A673 (cell line): ENCODE measurements at regions of chr4 and their contacts with region 1.

Region 1: GRCh38 chr4:26860157-26860921 is at the start of gene STIM2:
- DNase-seq: peak; percentile 99
- H3K4me3 ChIP-seq: peak within 1 kb of the TSS; percentile 85
- H3K27ac ChIP-seq: peak within 1 kb of the TSS; percentile 88
- H3K4me1 ChIP-seq: peaks cover 52% of the 10 kb centered on the region
- H3K27me3 ChIP-seq: no peaks in the 10 kb centered on the region
- CTCF ChIP-seq: peak; percentile 61
- total RNA-seq, gene STIM2: 56.1 and 59.0 TPM in 2 replicates

Region 2: GRCh38 chr4:26568446-26568994 is 291.8 kb before region 1 on chr4:
- CTCF ChIA-PET with region 1: no interaction called
- POLR2A ChIA-PET with region 1: no interaction called
- intact Hi-C with region 1: loop called (anchors 10 kb)
- DNase-seq: peak; percentile 96
- H3K4me3 ChIP-seq: no peak overlapping the region
- H3K27ac ChIP-seq: peak overlapping the region; percentile 44
- H3K4me1 ChIP-seq: peaks cover 40% of the 10 kb centered on the region
- H3K27me3 ChIP-seq: no peaks in the 10 kb centered on the region
- CTCF ChIP-seq: no peak

Region 3: GRCh38 chr4:26787461-26788340 is 72.6 kb before region 1 on chr4:
- CTCF ChIA-PET with region 1: no interaction called
- POLR2A ChIA-PET with region 1: no interaction called
- intact Hi-C with region 1: loop called (anchors 5 kb)
- DNase-seq: peak; percentile 85
- H3K4me3 ChIP-seq: no peak overlapping the region
- H3K27ac ChIP-seq: peak overlapping the region; percentile 62
- H3K4me1 ChIP-seq: peaks cover 39% of the 10 kb centered on the region
- H3K27me3 ChIP-seq: no peaks in the 10 kb centered on the region
- CTCF ChIP-seq: peak; percentile 73

Region 4: DNA sequence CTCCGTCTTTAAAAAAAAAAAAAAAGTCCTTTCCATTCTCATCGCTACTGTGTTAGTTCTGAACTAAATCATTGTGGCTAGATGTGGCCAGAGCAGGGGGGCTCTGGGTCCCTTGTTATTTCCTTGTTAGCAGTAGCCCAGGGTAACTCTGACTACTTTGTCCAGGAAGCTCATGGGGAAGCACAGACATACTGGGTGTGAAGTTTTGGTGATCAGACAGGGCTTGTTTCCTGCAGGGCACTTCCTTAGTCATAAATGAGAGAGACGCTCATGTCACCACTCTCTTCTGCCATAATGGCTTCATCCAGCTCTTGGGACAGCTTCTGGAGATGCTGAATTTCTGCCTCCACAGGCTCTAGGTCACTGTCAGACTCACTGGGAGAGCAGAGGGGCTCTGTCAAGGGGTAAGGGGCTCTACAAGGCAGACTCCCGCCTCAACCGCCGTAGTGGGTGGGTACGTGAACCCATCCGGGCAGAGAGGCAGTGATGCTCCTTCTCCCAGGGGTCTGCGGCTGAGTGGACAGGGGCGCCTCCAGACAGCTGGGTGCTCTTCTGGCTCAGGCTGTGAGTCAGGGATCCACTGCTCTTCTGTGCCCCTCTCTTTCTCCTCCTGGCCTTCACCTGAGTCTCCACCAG is 13.2 kb after region 1 on chr4:
- CTCF ChIA-PET with region 1: no interaction called
- POLR2A ChIA-PET with region 1: interaction called, 16 read pairs
- intact Hi-C with region 1: no loop called
- DNase-seq: no peak
- H3K4me3 ChIP-seq: no peak overlapping the region
- H3K27ac ChIP-seq: peak overlapping the region; percentile 25
- H3K4me1 ChIP-seq: peaks cover 58% of the 10 kb centered on the region
- H3K27me3 ChIP-seq: no peaks in the 10 kb centered on the region
- CTCF ChIP-seq: no peak

Region 5: DNA sequence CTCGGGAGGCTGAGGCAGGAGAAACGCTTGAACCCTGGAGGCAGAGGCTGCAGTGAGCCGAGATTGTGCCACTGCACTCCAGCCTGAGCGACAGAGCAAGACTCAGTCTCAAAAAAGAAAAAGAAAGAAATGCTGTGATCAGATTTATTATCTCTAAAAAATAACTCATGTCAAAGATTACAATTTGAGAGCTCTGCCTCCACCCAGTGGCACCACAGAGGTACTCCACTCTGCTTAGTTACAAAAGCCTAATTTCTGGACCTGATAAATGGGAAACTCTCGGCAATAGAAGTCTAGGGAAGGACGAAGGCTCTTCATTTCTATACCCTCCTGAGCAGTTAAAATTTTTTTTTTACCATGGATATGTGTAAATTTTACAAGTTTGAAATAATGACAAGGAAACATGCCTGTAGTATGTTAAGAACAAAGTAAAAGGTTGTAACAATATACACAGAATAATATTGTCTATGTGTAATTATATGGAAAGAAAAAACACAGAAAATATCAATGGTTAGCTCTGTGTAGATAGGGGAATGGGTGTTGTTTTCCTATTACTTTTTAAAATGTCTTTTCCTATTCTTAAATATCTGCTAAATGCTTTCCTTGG is 150.1 kb after region 1 on chr4:
- CTCF ChIA-PET with region 1: no interaction called
- POLR2A ChIA-PET with region 1: interaction called, 4 read pairs
- intact Hi-C with region 1: loop called (anchors 2 kb)
- DNase-seq: peak; percentile 84
- H3K4me3 ChIP-seq: no peak overlapping the region
- H3K27ac ChIP-seq: no peak overlapping the region
- H3K4me1 ChIP-seq: peaks cover 36% of the 10 kb centered on the region
- H3K27me3 ChIP-seq: no peaks in the 10 kb centered on the region
- CTCF ChIP-seq: peak; percentile 89

Region 6: GRCh38 chr4:27318743-27319142 is 458.4 kb after region 1 on chr4:
- CTCF ChIA-PET with region 1: no interaction called
- POLR2A ChIA-PET with region 1: no interaction called
- intact Hi-C with region 1: no loop called
- DNase-seq: peak; percentile 80
- H3K4me3 ChIP-seq: no peak overlapping the region
- H3K27ac ChIP-seq: no peak overlapping the region
- H3K4me1 ChIP-seq: no peaks in the 10 kb centered on the region
- H3K27me3 ChIP-seq: no peaks in the 10 kb centered on the region
- CTCF ChIP-seq: peak; percentile 75

Region 7: DNA sequence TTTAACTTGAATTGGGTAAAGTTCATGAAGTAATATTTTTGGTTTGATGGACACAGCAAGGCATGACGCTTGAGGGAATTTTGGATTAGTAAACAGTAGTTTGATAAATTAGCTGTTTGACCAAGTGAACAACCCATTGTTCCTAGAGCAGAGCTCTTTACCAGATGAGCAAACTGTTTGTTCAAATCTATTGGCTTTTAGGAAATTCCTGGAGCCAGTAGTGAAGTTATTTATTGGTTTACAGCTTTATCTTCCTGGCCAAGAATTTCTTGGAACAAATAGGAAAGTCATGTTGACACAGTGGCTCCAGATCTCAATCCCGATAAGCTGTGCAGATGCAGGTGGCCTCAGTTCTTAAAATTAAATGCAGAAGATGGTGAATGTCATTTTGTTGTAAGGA is 554.5 kb after region 1 on chr4:
- CTCF ChIA-PET with region 1: no interaction called
- POLR2A ChIA-PET with region 1: no interaction called
- intact Hi-C with region 1: no loop called
- DNase-seq: no peak
- H3K4me3 ChIP-seq: no peak overlapping the region
- H3K27ac ChIP-seq: no peak overlapping the region
- H3K4me1 ChIP-seq: no peaks in the 10 kb centered on the region
- H3K27me3 ChIP-seq: no peaks in the 10 kb centered on the region
- CTCF ChIP-seq: no peak